Heart right ventricle (tissue), 16 donors: ENCODE measurements at regions of chr14 and their contacts with region 1.

Region 1: GRCh38 chr14:52272375-52272774 is 4.9 kb downstream of the PTGDR start:
- DNase-seq: no peak
- ATAC-seq: no peak
- H3K4me3 ChIP-seq: no peak overlapping the region
- H3K27ac ChIP-seq: no peak overlapping the region
- H3K4me1 ChIP-seq: peaks cover 0 to 26% (median 15%) of the 10 kb centered on the region in 9 donors
- H3K27me3 ChIP-seq: peaks cover 0 to 35% (median 12%) of the 10 kb centered on the region in 7 donors
- CTCF ChIP-seq: peak in 2 of 9 donors; percentile 19 to 32

Region 2: GRCh38 chr14:51989293-51990234 is 282.8 kb before region 1 on chr14 and contains the start of gene RTRAF:
- intact Hi-C with region 1: loop called in 2 of 10 experiments (anchors 10 kb)
- DNase-seq: peak; percentile 95
- ATAC-seq: peak; percentile 98 to 100 (median 99)
- H3K4me3 ChIP-seq: peak within 1 kb of the TSS; percentile 80 to 96 (median 93)
- H3K27ac ChIP-seq: peak within 1 kb of the TSS; percentile 82 to 96 (median 91)
- H3K4me1 ChIP-seq: peaks cover 0 to 53% (median 46%) of the 10 kb centered on the region in 9 donors
- H3K27me3 ChIP-seq: no peaks in the 10 kb centered on the region
- CTCF ChIP-seq: no peak
- total RNA-seq, gene RTRAF: 181 to 258 (median 214) TPM

Region 3: DNA sequence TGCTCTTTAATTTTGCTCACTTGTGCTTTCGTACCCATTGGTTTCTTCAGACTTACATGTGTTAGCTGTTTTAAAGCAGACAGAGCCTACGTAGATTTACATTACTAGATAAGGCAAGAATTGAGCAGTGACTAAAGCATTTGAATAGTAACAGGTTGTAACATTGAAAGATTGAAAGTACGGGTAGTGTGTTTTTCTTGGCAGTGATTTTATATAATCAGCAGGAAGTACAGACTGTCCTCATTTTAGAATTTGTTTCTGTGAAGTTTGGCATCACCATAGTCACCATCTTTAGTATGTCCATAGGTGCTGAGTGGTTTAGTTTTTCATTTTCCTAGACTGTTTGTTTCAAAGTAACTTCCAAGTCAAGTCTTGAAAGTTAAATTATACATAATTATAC is 269.1 kb before region 1 on chr14:
- intact Hi-C with region 1: loop called in 3 of 10 experiments (anchors 5 to 10 kb)
- DNase-seq: no peak
- ATAC-seq: peak in 7 of 8 donors; percentile 23 to 91 (median 75)
- H3K4me3 ChIP-seq: no peak overlapping the region
- H3K27ac ChIP-seq: peak overlapping the region in 9 of 10 donors; percentile 34 to 66 (median 56)
- H3K4me1 ChIP-seq: peaks cover 0 to 62% (median 28%) of the 10 kb centered on the region in 9 donors
- H3K27me3 ChIP-seq: no peaks in the 10 kb centered on the region
- CTCF ChIP-seq: no peak

Region 4: GRCh38 chr14:52299692-52300278 is 27.4 kb after region 1 on chr14:
- intact Hi-C with region 1: no loop called
- DNase-seq: no peak
- ATAC-seq: peak in 5 of 8 donors; percentile 28 to 72 (median 52)
- H3K4me3 ChIP-seq: no peak overlapping the region
- H3K27ac ChIP-seq: no peak overlapping the region
- H3K4me1 ChIP-seq: peaks cover 0 to 19% (median 0%) of the 10 kb centered on the region in 9 donors
- H3K27me3 ChIP-seq: no peaks in the 10 kb centered on the region
- CTCF ChIP-seq: peak; percentile 50 to 84 (median 77)